Gastrocnemius medialis (tissue), 4 donors: ENCODE measurements at regions of chr20 and their contacts with region 1.

Region 1: GRCh38 chr20:35303735-35304491 is 11.7 kb upstream of the FAM83C start:
- DNase-seq: peak; percentile 67 to 81
- ATAC-seq: peak; percentile 39 to 46
- H3K4me3 ChIP-seq: no peak overlapping the region
- H3K27ac ChIP-seq: peak overlapping the region in 3 of 4 donors; percentile 82 to 90 (median 83)
- H3K4me1 ChIP-seq: peaks cover 12 to 40% of the 10 kb centered on the region in 2 donors
- H3K27me3 ChIP-seq: no peaks in the 10 kb centered on the region
- CTCF ChIP-seq: peak; percentile 68 to 95 (median 92)
- POLR2A ChIP-seq: no peak

Region 2: DNA sequence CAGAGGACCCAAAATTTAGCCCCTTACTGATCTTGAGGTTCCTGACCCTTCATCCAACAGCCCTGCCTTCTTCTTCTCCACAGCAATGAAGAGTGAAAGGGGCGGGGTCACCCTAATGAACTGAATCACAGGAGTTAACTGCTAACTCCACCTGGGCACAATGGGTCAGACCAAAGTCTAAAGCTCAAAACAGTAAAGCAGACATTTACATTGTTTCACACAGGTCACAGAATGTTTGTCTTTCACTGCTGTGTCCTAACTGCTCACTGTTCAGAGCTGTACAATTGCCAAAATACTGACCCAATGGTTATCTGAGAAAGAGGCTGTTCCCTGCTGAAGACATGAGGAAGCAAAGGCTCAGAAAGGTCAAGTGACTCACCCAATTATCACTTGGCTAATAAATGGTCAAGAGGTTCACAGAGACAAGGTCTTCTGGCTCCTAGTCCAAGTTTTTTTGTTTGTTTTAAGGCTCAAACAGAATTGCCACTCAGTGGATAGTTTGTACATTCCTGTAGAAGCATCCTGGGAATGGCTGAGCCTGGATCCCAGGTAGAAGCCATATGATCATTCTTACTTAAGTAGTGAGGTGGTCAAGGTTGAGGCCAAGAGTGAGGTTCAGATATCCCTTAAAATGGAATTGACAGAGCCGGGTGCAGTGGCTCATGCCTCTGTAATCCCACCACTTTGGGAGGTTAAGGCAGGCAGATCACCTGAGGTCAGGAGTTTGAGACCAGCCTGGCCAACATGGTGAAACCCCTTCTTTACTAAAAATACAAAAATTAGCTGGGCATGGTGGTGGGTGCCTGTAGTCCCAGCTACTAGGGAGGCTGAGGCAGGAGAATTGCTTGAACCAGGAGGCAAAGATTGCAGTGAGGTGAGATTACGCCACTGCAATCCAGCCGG is 23.4 kb after region 1 on chr20:
- in situ Hi-C with region 1: no loop called
- intact Hi-C with region 1: loop called (anchors 2 kb)
- DNase-seq: no peak
- ATAC-seq: peak; percentile 54 to 73
- H3K4me3 ChIP-seq: no peak overlapping the region
- H3K27ac ChIP-seq: peak overlapping the region in 3 of 4 donors; percentile 65 to 75 (median 74)
- H3K4me1 ChIP-seq: peaks cover 8 to 33% of the 10 kb centered on the region in 2 donors
- H3K27me3 ChIP-seq: no peaks in the 10 kb centered on the region
- CTCF ChIP-seq: no peak
- POLR2A ChIP-seq: no peak

Region 3: DNA sequence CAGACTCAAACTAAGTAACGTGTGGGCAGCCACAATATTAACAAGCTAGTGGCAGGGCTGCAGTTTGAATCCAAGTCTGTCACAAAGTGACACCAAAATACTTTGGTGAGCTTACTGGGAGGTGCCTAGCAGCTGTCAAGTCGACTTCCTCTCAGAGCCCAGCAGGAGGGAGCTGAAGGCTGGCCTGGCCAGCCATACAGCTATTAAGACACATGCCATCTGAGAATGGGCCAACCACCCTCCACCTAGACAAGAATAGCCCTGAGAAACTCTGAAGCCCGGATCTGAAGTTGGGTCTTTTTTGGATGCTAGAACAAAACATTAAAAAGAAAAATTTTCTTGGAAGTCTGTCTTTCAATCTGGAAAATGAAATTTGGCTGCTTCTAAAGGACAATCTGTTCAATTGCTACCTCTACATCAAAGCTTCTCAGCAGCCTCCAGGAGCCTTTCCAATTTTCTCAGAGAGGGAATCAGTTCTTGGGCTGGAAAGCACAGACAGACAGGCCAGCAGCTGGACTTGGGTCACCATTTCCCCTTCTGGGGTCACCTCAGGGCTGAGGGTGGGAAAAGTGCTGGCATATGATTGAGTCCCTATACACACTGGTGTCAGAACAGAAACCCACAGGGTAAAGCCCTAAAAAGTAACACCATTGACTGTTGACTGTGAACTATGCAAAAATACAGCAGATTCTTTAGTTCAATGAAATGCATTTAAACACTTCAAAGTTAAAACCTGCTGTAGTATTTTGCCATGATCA is 64.9 kb after region 1 on chr20:
- in situ Hi-C with region 1: no loop called
- intact Hi-C with region 1: loop called (anchors 10 kb)
- DNase-seq: peak; percentile 57 to 87
- ATAC-seq: peak; percentile 97 to 100
- H3K4me3 ChIP-seq: no peak overlapping the region
- H3K27ac ChIP-seq: peak overlapping the region; percentile 72 to 80 (median 76)
- H3K4me1 ChIP-seq: peaks cover 23 to 29% of the 10 kb centered on the region in 2 donors
- H3K27me3 ChIP-seq: no peaks in the 10 kb centered on the region
- CTCF ChIP-seq: no peak
- POLR2A ChIP-seq: no peak

Region 4: DNA sequence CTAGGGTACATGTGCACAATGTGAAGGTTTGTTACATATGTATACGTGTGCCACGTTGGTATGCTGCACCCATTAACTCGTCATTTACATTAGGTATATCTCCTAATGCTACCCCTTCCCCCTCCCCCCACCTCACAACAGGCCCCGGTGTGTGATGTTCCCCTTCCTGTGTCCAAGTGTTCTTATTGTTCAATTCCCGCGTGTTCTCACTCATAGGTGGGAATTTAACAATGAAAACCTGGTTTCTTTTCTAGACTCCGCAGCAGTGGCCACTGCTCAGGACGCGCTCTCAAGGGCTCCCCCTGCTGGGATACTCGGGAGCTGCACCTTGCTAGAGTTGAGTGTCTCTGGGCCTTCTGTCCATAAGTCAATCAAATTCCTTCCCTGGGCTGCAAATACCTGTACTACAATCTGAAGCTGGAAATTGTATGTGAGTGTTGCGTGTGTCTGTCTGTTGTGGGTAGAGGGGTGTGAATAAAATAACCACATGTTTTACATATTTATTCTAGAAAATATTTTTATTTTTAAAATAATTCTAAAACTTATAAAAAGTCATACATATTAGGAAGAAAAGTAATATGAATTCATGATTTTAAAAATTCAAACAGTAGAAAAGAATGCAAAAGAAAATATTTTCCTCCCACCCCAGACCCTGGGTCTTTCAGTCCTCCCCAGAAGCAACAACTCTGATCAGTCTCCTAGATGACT is 143.3 kb after region 1 on chr20:
- in situ Hi-C with region 1: loop called (anchors 5 kb)
- intact Hi-C with region 1: loop called (anchors 1 kb)
- DNase-seq: peak; percentile 52 to 72
- ATAC-seq: peak; percentile 86 to 92
- H3K4me3 ChIP-seq: peak overlapping the region; percentile 50 to 65 (median 52)
- H3K27ac ChIP-seq: no peak overlapping the region
- H3K4me1 ChIP-seq: no peaks in the 10 kb centered on the region
- H3K27me3 ChIP-seq: peaks cover 0 to 5% (median 0%) of the 10 kb centered on the region in 3 donors
- CTCF ChIP-seq: peak; percentile 83 to 96 (median 90)
- POLR2A ChIP-seq: no peak